Activated CD4-positive, alpha-beta memory T cell treated with anti-CD3 and anti-CD28 coated beads for 36 hours (primary cell): ENCODE measurements at regions of chr3 and their contacts with region 1.

Region 1: DNA sequence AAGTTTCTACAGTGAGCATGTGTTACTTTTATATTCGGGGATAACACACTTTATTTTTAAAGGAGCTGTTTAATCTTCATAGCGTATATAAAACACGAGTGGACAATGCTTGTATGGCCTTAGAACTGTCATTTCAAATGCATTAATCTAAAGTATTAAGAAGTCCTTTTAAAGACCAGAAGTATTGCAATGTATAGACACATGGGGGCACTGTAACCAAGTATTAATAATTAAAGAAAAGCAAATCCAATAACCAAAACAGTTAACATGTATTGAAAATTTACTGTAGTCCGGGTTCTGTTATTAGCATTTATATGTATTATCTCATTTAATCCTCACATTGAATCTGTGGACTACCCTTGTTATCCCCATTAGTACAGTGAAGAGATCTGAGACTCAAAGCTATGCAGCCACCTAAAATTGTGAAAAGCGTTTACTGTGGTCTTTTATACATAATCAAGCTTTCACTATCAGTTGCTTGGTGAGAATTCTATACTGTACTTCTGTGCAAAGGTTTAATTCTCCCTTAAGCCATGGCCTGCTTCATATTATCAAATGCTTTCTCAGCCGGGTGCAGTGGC is 10.1 kb downstream of the ARL14 start:
- DNase-seq: no peak
- H3K4me3 Mint-ChIP-seq: no peak overlapping the region
- H3K27ac Mint-ChIP-seq: no peak overlapping the region
- H3K4me1 Mint-ChIP-seq: no peaks in the 10 kb centered on the region
- H3K27me3 Mint-ChIP-seq: no peaks in the 10 kb centered on the region

Region 2: GRCh38 chr3:160618878-160619277 is 68.2 kb before region 1 on chr3:
- CTCF ChIA-PET with region 1: no interaction called
- POLR2A ChIA-PET with region 1: no interaction called
- intact Hi-C with region 1: no loop called
- DNase-seq: no peak
- H3K4me3 Mint-ChIP-seq: no peak overlapping the region
- H3K27ac Mint-ChIP-seq: no peak overlapping the region
- H3K4me1 Mint-ChIP-seq: no peaks in the 10 kb centered on the region
- H3K27me3 Mint-ChIP-seq: peaks cover 34% of the 10 kb centered on the region

Region 3: GRCh38 chr3:160697628-160698382 is 10.8 kb after region 1 on chr3:
- CTCF ChIA-PET with region 1: interaction called, 22 read pairs
- POLR2A ChIA-PET with region 1: no interaction called
- intact Hi-C with region 1: no loop called
- DNase-seq: no peak
- H3K4me3 Mint-ChIP-seq: no peak overlapping the region
- H3K27ac Mint-ChIP-seq: no peak overlapping the region
- H3K4me1 Mint-ChIP-seq: peaks cover 2% of the 10 kb centered on the region
- H3K27me3 Mint-ChIP-seq: no peaks in the 10 kb centered on the region

Region 4: GRCh38 chr3:160804762-160805161 is 117.7 kb after region 1 on chr3:
- CTCF ChIA-PET with region 1: no interaction called
- POLR2A ChIA-PET with region 1: no interaction called
- intact Hi-C with region 1: no loop called
- DNase-seq: no peak
- H3K4me3 Mint-ChIP-seq: no peak overlapping the region
- H3K27ac Mint-ChIP-seq: no peak overlapping the region
- H3K4me1 Mint-ChIP-seq: peaks cover 10% of the 10 kb centered on the region
- H3K27me3 Mint-ChIP-seq: peaks cover 8% of the 10 kb centered on the region